Heart left ventricle (tissue), 16 donors: ENCODE measurements at regions of chr3 and their contacts with region 1.

Region 1: DNA sequence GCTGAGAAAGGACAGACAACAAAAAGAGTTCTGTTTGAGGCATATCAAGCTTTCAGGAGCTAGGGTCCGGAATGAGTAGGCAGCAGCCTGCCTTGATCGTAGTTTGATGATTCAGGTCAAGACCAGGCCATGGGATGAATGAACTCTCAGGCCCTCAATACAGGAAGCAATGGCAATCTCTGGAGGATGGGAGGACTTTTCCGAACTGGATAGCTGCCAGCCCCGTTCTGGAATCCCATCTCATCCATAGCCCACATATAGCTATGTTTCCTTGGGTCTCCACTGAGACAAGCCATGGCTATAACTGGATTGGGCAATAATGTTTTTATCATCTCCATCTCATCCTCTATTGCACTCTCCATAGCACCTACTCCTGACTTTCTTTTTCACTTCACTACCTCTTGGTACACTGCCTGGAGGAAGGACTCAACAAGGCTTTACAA is 12.8 kb downstream of the AHSG start:
- DNase-seq: no peak
- ATAC-seq: no peak
- H3K4me3 ChIP-seq: no peak overlapping the region
- H3K27ac ChIP-seq: no peak overlapping the region
- H3K4me1 ChIP-seq: no peaks in the 10 kb centered on the region
- H3K27me3 ChIP-seq: peaks cover 0 to 10% (median 0%) of the 10 kb centered on the region in 9 donors
- CTCF ChIP-seq: no peak
- POLR2A ChIP-seq: no peak

Region 2: GRCh38 chr3:186534113-186534669 is 91.4 kb before region 1 on chr3:
- intact Hi-C with region 1: no loop called
- DNase-seq: no peak
- ATAC-seq: peak in 2 of 4 donors; percentile 16 to 60
- H3K4me3 ChIP-seq: no peak overlapping the region
- H3K27ac ChIP-seq: no peak overlapping the region
- H3K4me1 ChIP-seq: peaks cover 0 to 30% (median 7%) of the 10 kb centered on the region in 12 donors
- H3K27me3 ChIP-seq: no peaks in the 10 kb centered on the region
- CTCF ChIP-seq: no peak
- POLR2A ChIP-seq: no peak

Region 3: GRCh38 chr3:186640473-186640818 is 14.8 kb after region 1 on chr3:
- intact Hi-C with region 1: no loop called
- DNase-seq: peak in 1 of 5 donors; percentile 37
- ATAC-seq: peak in 3 of 4 donors; percentile 20 to 44 (median 37)
- H3K4me3 ChIP-seq: no peak overlapping the region
- H3K27ac ChIP-seq: peak overlapping the region in 1 of 12 donors; percentile 10
- H3K4me1 ChIP-seq: peaks cover 0 to 18% (median 5%) of the 10 kb centered on the region in 12 donors
- H3K27me3 ChIP-seq: no peaks in the 10 kb centered on the region
- CTCF ChIP-seq: no peak
- POLR2A ChIP-seq: no peak

Region 4: GRCh38 chr3:186815435-186815834 is 189.8 kb after region 1 on chr3:
- intact Hi-C with region 1: loop called in 1 of 10 experiments (anchors 5 kb)
- DNase-seq: no peak
- ATAC-seq: no peak
- H3K4me3 ChIP-seq: no peak overlapping the region
- H3K27ac ChIP-seq: no peak overlapping the region
- H3K4me1 ChIP-seq: no peaks in the 10 kb centered on the region
- H3K27me3 ChIP-seq: peaks cover 0 to 4% (median 0%) of the 10 kb centered on the region in 9 donors
- CTCF ChIP-seq: no peak
- POLR2A ChIP-seq: no peak